ENCODE measurements at regions of chr3 and their contacts with region 1.

Region 1: GRCh38 chr3:7285505-7285904 is 424.6 kb downstream of the GRM7 start:
- DNase-seq: no peak
- ATAC-seq: peak in 1 of 8 donors; percentile 31
- H3K4me3 ChIP-seq: no peak overlapping the region
- H3K27ac ChIP-seq: no peak overlapping the region
- H3K4me1 ChIP-seq: peaks cover 0 to 2% (median 0%) of the 10 kb centered on the region in 9 donors
- H3K27me3 ChIP-seq: no peaks in the 10 kb centered on the region
- CTCF ChIP-seq: peak in 7 of 9 donors; percentile 26 to 49 (median 36)

Region 2: DNA sequence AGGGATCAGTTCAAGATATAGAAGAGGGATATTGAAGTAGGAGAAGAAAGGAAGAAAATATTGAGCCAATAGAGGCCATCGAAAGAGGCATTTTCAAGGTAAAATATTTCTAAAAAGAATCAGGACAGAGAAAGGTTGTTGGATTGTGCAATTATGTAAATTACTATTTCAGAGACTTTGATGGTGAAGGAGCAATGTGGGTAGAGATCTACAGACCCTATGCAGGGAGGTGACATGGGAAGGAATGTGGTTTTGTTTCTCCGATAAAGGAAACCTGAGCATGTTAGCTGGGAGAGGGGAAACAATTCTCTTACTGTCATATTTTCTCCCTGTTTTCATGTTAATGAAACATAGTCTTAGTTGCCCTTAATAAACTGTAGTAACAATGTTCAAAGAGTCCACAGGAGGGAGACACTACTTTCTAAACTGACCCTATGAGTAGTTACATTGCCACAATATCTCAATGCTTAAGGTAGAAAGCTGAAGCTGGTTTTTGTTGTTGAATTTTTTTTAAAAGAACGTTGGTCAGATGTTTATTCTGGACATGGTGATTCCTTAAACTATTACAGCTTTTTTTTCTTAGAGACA is 291.3 kb before region 1 on chr3:
- intact Hi-C with region 1: no loop called
- DNase-seq: no peak
- ATAC-seq: no peak
- H3K4me3 ChIP-seq: no peak overlapping the region
- H3K27ac ChIP-seq: no peak overlapping the region
- H3K4me1 ChIP-seq: no peaks in the 10 kb centered on the region
- H3K27me3 ChIP-seq: no peaks in the 10 kb centered on the region
- CTCF ChIP-seq: peak in 5 of 9 donors; percentile 7 to 34 (median 17)

Region 3: GRCh38 chr3:7546253-7546652 is 260.7 kb after region 1 on chr3:
- intact Hi-C with region 1: loop called in 5 of 10 experiments (anchors 2 to 10 kb)
- DNase-seq: peak in 1 of 2 donors; percentile 6
- ATAC-seq: peak in 3 of 8 donors; percentile 33 to 42 (median 39)
- H3K4me3 ChIP-seq: no peak overlapping the region
- H3K27ac ChIP-seq: no peak overlapping the region
- H3K4me1 ChIP-seq: peaks cover 0 to 7% (median 0%) of the 10 kb centered on the region in 9 donors
- H3K27me3 ChIP-seq: no peaks in the 10 kb centered on the region
- CTCF ChIP-seq: peak in 8 of 9 donors; percentile 14 to 59 (median 42)

Measured in heart right ventricle (tissue), 16 donors.